ENCODE measurements at regions of chr20 and their contacts with region 1.

Region 1: GRCh38 chr20:36736451-36737182 is 9.3 kb downstream of the NDRG3 start:
- DNase-seq: no peak
- ATAC-seq: no peak
- H3K4me3 ChIP-seq: no peak overlapping the region
- H3K4me3 Mint-ChIP-seq: no peak overlapping the region
- H3K27ac ChIP-seq: no peak overlapping the region
- H3K27ac Mint-ChIP-seq: no peak overlapping the region
- H3K4me1 ChIP-seq: peaks cover 17% of the 10 kb centered on the region
- H3K4me1 Mint-ChIP-seq: peaks cover 33% of the 10 kb centered on the region
- H3K27me3 ChIP-seq: no peaks in the 10 kb centered on the region
- H3K27me3 Mint-ChIP-seq: no peaks in the 10 kb centered on the region
- CTCF ChIP-seq: no peak

Region 2: GRCh38 chr20:35831029-35831428 is 905.6 kb before region 1 on chr20:
- CTCF ChIA-PET with region 1: no interaction called
- POLR2A ChIA-PET with region 1: no interaction called
- intact Hi-C with region 1: loop called in 1 of 2 experiments (anchors 5 kb)
- DNase-seq: no peak
- ATAC-seq: no peak
- H3K4me3 ChIP-seq: no peak overlapping the region
- H3K4me3 Mint-ChIP-seq: no peak overlapping the region
- H3K27ac ChIP-seq: no peak overlapping the region
- H3K27ac Mint-ChIP-seq: no peak overlapping the region
- H3K4me1 ChIP-seq: no peaks in the 10 kb centered on the region
- H3K4me1 Mint-ChIP-seq: peaks cover 44% of the 10 kb centered on the region
- H3K27me3 ChIP-seq: no peaks in the 10 kb centered on the region
- H3K27me3 Mint-ChIP-seq: no peaks in the 10 kb centered on the region
- CTCF ChIP-seq: no peak

Measured in CD8-positive, alpha-beta T cell (primary cell).